Esophagus muscularis mucosa (tissue), 4 donors: ENCODE measurements at regions of chr3 and their contacts with region 1.

Region 1: GRCh38 chr3:118884748-118885206 is 149.9 kb downstream of the IGSF11 start:
- DNase-seq: no peak
- H3K4me3 ChIP-seq: peak overlapping the region in 1 of 4 donors; percentile 26
- H3K27ac ChIP-seq: no peak overlapping the region
- H3K4me1 ChIP-seq: no peaks in the 10 kb centered on the region
- H3K27me3 ChIP-seq: peaks cover 0 to 19% (median 0%) of the 10 kb centered on the region in 4 donors
- CTCF ChIP-seq: peak; percentile 87 to 88 (median 87)
- EP300 ChIP-seq: no peak
- POLR2A ChIP-seq: no peak

Region 2: DNA sequence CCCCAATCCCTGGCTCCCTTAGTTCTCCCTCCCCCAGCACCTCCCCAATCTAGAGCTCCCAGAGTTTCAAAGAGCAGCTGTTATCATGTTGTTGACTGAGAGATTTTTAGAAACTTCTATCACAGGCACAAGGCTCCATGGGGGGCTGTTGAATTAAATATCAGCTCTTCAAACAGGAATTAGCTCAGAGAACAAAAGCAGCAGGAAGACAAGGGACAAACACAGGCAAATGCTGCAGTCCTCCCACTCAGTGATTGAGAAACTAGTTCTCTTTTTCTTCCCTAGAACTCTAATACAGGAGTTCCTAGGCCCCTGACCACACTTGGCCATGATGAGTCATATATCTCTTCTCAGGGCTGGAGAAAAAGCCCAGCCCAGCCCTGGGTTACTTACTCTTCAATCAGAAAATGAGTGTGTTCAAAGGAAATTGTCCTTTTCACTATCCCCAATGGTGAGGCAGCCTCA is 112.2 kb before region 1 on chr3:
- intact Hi-C with region 1: no loop called
- DNase-seq: no peak
- H3K4me3 ChIP-seq: no peak overlapping the region
- H3K27ac ChIP-seq: no peak overlapping the region
- H3K4me1 ChIP-seq: no peaks in the 10 kb centered on the region
- H3K27me3 ChIP-seq: no peaks in the 10 kb centered on the region
- CTCF ChIP-seq: no peak
- EP300 ChIP-seq: no peak
- POLR2A ChIP-seq: no peak

Region 3: DNA sequence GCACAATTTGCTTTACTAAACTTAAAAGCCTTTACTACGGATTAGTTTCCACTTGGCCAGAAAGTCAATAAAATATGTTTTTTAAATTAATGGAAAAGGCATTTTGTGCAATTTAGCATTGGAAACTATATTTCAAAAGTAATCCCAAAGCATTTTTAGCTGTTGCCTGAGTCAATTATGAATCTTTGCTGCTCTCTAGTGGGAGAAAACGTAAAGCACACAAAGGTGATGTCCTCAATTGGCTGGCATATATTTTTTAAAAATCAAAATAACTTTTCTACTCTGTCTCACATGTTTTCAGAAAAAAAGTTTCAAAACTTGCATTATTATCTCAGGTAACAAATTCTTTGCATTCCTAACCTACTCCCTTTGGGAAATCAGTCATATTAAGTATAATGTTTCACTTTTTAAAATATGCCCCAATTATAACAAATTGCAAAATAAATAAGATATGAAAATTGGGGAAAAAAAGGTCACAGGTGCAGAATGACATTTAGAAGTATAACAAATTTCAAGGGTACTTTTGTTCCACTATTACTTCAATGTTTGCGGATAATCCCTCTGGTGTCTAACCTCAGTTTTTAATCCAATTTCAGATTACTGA is 213.9 kb after region 1 on chr3:
- intact Hi-C with region 1: loop called (anchors 2 kb)
- DNase-seq: no peak
- H3K4me3 ChIP-seq: no peak overlapping the region
- H3K27ac ChIP-seq: no peak overlapping the region
- H3K4me1 ChIP-seq: no peaks in the 10 kb centered on the region
- H3K27me3 ChIP-seq: no peaks in the 10 kb centered on the region
- CTCF ChIP-seq: peak; percentile 65 to 67 (median 67)
- EP300 ChIP-seq: no peak
- POLR2A ChIP-seq: no peak

Region 4: DNA sequence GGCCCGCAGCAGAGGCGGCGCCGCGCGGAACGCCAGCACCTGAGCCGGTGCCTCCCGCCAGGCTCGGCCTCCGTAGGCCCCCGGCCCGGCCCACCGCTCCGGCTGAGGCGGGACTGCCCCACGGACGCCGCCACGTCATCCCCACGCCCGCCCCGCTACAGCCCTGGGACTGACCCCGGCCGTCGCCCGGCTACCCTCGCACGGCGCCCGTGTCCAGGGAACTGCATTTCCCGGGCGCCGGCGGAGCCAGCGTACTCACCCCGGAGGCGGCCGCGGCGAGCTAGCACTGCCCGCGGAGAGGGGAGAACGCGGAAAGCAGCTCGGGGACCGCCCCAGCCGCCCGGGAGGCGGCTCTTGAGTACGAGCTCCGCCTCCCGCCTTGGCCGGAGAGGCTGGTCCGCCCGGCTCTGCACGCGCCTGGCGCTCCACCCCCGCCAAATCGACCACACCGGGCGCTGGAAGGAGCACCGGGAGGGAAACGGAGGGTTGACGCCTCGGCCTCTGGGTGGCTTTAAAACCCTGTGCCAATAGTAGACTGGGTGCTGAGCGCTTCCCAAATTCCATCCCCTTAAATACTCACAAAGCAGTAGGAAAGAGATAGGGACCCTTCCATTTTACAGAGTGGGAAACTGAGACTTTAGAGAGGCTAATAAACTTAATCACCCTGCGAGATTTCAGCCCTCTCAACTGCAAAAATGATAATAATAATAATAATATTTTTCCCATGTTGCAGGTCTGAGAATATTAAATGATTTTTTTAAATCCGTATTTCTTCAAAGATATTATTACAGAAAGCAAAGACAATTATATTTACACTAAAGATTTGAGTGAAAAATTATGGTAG is 356.0 kb after region 1 on chr3 and contains the start of gene B4GALT4:
- intact Hi-C with region 1: loop called (anchors 10 kb)
- DNase-seq: peak; percentile 93
- H3K4me3 ChIP-seq: peak within 1 kb of the TSS; percentile 81 to 94 (median 82)
- H3K27ac ChIP-seq: peak within 1 kb of the TSS; percentile 88 to 92 (median 92)
- H3K4me1 ChIP-seq: peaks cover 19 to 29% (median 27%) of the 10 kb centered on the region in 4 donors
- H3K27me3 ChIP-seq: no peaks in the 10 kb centered on the region
- CTCF ChIP-seq: no peak
- EP300 ChIP-seq: no peak
- POLR2A ChIP-seq: peak; percentile 48
- total RNA-seq, gene B4GALT4: 13.3 to 15.4 (median 14.0) TPM